Calu3 (cell line): ENCODE measurements at regions of chr18 and their contacts with region 1.

Region 1: DNA sequence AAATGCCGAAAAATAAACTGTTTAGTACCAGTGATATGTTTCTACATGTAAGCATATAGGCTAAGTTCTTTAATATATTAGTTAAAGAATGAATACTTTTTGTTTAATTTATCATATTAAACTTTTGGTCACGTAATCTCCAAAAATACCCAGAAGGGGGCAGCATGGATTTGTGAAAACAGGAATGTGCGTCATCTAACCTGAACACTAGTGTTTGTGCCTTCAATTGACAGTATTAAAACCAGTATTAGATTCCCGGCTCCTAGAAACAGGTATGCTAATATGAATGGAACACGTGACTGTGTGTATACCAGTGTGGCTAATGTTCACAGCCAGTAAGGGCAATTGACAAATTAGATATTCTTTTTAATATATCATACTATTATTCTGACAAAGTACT is 51.8 kb downstream of the WDR7 start:
- DNase-seq: peak; percentile 63
- H3K4me3 Mint-ChIP-seq: no peak overlapping the region
- H3K27ac Mint-ChIP-seq: no peak overlapping the region
- H3K4me1 Mint-ChIP-seq: no peaks in the 10 kb centered on the region
- H3K27me3 Mint-ChIP-seq: no peaks in the 10 kb centered on the region
- CTCF ChIP-seq: peak; percentile 60

Region 2: DNA sequence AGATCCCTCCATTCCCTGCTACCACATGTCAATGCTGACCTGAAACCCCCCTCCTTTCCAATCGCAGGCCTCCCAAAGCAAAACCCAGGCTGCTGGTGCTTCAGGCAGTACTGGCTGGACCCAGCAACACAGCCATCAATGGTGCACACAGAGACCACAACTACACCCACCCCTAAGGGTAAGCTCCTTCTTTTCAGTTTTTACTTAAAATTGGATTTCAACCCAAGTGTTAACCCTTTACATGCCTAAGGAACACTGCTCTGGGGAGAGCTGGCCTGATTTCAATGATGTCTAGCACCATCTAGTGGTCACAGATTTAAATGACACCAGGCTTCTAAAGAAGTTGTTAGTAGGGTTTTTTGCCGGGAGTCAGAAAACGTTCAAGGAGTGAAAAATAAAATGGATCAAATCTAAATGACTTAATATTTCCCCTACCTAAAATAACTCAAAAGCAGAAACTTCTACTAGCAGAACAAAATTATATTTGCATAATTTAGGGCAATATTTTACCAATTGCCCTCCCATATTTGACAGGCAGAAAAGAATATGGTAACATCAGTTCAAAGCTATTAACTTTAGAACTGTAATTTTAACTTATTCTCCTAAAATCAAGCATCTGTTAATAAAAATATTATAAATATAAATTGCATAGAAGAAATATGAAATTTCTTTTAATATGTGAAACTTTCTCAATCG is 858.9 kb after region 1 on chr18:
- CTCF ChIA-PET with region 1: no interaction called
- intact Hi-C with region 1: loop called (anchors 2 kb)
- DNase-seq: peak; percentile 44
- H3K4me3 Mint-ChIP-seq: no peak overlapping the region
- H3K27ac Mint-ChIP-seq: no peak overlapping the region
- H3K4me1 Mint-ChIP-seq: peaks cover 7% of the 10 kb centered on the region
- H3K27me3 Mint-ChIP-seq: no peaks in the 10 kb centered on the region
- CTCF ChIP-seq: peak; percentile 91